HEK293 (cell line): ENCODE measurements at regions of chr18 and their contacts with region 1.

Region 1: GRCh38 chr18:3665780-3666525 is 216.0 kb downstream of the TGIF1 start:
- H3K4me3 ChIP-seq: no peak overlapping the region
- H3K27ac ChIP-seq: peak overlapping the region; percentile 54
- H3K4me1 ChIP-seq: no peaks in the 10 kb centered on the region
- CTCF ChIP-seq: peak; percentile 70

Region 2: DNA sequence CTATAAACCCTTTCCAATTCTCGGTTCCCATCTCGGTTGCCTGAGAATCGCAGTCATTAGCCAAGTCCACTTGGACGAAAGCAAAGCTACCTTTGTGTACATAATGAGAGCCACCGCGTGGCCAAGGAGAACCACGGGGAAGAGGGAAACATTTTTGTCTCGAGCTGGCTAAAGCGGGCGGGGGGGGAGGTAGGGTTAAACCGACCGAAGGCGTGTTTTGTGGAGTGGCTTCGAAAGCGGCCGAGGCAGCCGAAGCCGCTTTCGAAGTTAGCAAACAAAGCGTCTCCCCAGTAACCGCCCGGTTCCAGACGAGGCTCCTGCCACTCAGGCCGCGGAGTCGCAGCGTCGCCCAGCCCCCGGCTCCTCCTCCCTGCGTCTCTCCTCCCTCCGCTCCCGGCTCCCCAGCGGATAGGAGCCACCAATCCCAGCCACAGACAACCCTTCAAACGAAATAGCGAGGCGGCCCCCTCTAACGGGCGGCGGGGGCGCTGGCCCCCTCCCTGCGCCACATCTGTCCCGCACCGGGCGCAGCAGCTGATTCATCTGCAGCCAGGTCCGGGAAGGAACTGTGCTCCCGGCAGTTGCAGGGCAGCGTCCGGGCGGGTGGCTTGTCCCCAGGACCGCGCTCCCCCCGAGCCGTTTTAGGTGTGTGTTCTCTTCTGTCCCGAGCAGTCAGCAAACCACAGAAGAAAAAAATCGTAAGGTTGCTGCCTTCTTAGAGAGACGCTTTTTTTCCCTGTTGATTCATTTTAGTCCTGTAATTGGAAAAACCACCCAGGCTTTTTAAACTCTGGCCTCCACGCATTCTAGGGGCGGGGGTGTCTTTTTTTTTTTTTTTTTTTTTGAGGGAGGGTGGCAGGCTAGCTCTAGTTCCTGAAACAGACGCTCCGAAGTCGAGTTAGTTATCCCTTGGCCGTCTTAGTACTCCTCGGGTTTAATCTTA is 217.8 kb before region 1 on chr18:
- CTCF ChIA-PET with region 1: interaction called, 54 read pairs
- POLR2A ChIA-PET with region 1: interaction called, 17 read pairs
- H3K4me3 ChIP-seq: peak overlapping the region; percentile 56
- H3K27ac ChIP-seq: peak overlapping the region; percentile 98
- H3K4me1 ChIP-seq: peaks cover 5% of the 10 kb centered on the region
- CTCF ChIP-seq: peak; percentile 76

Region 3: DNA sequence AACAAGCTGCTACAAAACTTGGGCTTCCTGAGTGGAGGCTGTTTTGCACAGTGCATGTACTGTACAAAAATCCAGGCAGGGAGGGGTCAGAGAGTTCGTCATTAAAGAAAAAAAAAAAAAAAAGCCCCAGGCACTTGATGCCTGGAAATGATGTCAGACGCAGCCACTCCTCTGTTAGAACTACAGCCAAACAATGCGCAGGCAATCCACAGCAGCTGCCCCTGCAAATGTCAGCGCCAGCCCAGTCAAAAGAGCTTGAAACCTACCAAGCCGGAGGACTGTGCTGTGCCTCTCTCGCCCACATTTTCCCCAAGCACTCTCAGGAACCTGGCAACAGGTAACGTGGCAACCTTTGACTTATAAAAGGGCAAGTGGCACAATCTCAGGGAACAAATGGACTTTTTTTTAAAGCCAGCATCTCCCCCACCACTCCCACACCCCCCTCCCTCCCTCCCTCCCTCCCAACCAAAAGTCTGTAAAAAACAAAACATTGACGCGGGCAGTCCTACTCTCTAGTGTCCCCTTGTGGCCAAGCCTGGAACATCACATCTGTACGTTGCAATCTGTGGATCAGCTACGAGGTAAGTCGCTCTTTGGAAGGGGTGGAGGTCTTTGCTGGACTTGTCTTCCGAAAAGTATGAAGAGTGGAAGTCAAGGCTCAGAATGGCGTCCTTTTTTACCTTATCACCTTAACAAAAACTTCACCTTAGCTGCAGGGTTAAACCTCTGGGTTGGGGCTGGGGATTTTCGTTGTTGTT is 71.9 kb before region 1 on chr18:
- CTCF ChIA-PET with region 1: interaction called, 65 read pairs
- POLR2A ChIA-PET with region 1: interaction called, 15 read pairs
- H3K4me3 ChIP-seq: peak overlapping the region; percentile 39
- H3K27ac ChIP-seq: peak overlapping the region; percentile 97
- H3K4me1 ChIP-seq: peaks cover 23% of the 10 kb centered on the region
- CTCF ChIP-seq: peak; percentile 58

Region 4: DNA sequence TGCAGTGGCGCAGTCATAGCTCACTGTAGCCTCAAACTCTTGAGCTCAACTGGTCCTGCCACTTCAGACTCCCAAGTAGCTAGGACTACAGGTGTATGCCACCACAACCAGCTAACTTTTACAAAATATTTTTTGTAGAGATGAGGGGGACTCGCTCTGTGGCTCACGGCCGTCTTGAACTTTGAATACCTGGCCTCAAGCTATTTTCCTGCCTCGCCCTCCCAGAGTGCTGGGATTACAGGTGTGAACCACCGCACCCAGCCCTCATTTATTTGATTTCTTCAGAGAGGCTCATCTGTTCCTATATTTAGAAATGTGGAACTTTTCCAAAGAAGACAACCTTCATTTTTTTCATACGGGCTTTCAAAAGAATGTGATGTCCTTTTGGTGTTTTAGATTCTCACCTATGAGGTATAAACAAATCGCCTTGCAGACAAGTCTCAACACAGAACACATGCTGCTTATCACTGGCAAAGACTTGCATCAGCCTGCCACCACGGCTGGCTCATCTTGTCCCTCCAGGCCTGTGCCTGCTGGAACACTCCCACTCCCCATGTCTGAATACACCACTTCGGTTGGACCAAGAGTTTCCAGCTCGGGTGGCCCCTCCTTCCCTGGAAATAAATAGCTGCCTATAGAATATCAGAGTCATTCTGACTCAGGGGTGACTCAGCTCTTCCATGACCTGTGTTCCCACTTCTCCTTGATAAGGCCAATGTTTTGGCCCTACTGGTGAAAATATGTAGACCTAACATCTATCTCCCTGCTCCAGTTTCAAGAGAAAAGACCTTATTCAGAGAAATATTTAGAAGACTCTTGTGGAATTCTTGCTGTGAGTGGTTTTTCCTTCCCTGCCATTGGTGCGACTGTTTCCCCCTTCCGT is 13.3 kb before region 1 on chr18:
- CTCF ChIA-PET with region 1: interaction called, 19 read pairs
- POLR2A ChIA-PET with region 1: interaction called, 5 read pairs
- H3K4me3 ChIP-seq: no peak overlapping the region
- H3K27ac ChIP-seq: no peak overlapping the region
- H3K4me1 ChIP-seq: peaks cover 4% of the 10 kb centered on the region; the same call in 1 of the 2 replicates
- CTCF ChIP-seq: no peak

Region 5: DNA sequence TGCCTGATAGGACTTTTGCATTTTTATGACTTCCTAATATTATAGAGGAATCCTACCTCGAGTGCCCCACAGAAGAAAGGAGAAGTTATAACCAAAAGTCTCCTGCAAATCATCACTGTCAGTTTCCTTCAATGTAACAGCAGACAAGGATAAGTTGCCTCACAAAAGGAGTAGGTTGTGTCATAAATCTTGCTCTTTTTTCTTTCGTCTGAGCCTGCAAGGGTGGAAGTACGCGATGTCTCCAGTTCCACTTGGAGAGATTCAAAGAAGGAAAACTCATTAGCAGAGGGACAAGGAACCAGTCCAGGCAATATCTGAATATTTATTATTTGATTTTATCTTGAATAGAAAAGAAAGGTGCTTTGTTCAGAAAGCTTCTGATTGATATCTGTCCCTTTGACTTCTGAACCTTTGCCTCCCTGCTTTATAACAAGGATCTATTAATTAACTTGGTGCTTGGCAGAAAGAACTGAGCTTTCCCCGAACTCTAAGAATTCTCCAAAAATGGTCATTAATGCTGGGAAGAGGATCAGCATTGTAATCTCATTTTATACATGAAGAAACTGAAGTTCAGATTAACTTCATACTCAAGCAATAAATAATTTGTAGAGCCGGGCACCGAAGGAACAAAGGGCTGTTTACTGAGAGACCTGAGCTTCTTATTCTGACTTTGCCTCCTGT is 56.5 kb after region 1 on chr18:
- CTCF ChIA-PET with region 1: no interaction called
- POLR2A ChIA-PET with region 1: no interaction called
- H3K4me3 ChIP-seq: no peak overlapping the region
- H3K27ac ChIP-seq: no peak overlapping the region
- H3K4me1 ChIP-seq: peaks cover 12% of the 10 kb centered on the region
- CTCF ChIP-seq: no peak

Region 6: GRCh38 chr18:3771121-3771971 is 105.4 kb after region 1 on chr18:
- CTCF ChIA-PET with region 1: interaction called, 11 read pairs
- POLR2A ChIA-PET with region 1: interaction called, 5 read pairs
- H3K4me3 ChIP-seq: peak overlapping the region; percentile 38
- H3K27ac ChIP-seq: peak overlapping the region; percentile 31; the same call in 1 of the 2 replicates
- H3K4me1 ChIP-seq: peaks cover 2% of the 10 kb centered on the region; the same call in 1 of the 2 replicates
- CTCF ChIP-seq: peak; percentile 92